ENCODE measurements at regions of chrX and their contacts with region 1.

Region 1: DNA sequence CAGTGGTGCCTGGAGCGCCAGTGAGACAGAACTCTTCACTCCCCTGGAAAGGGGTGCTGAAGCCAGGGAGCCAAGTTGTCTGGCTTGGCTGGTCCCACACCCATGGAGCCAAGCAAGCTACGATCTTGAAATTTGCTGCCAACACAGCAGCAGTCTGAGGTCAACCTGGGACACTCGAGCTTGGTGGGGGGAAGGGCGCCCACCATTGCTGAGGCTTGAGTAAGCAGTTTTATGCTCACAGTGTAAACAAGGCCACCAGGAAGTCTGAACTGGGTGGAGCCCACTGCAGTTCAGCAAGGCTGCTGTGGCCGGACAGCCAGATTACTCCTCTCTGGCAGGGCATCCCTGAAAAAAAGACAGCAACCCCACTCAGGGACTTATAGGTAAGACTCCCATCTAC is 149.5 kb downstream of the EDA2R start:
- DNase-seq: peak in 1 of 4 experiments; percentile 3
- ATAC-seq: peak; percentile 75
- H3K4me3 ChIP-seq: no peak overlapping the region
- H3K27ac ChIP-seq: no peak overlapping the region
- H3K4me1 ChIP-seq: no peaks in the 10 kb centered on the region; a peak in 1 of 5 replicates
- H3K27me3 ChIP-seq: no peaks in the 10 kb centered on the region
- CTCF ChIP-seq: no peak
- EP300 ChIP-seq: no peak
- POLR2A ChIP-seq: no peak
- RAD21 ChIP-seq: no peak

Region 2: DNA sequence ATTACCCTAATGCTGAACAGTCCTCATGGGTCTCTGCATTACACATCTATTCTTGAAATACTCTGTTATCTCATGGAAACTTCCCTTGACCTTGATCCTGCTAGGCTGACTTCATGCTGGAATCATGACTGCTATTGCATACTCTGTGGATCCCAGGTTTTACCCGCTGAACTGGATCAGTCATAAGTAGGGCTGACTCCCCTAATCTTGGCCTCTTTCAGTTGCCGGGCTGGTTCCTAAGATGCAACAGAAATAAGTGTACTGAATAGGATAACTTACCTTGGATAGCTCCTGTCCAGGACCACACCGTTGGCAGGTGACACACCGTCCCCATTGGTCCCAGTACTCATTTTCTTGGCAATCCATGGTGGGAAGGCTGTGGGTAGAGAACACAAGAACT is 126.3 kb after region 1 on chrX:
- CTCF ChIA-PET with region 1: no interaction called
- POLR2A ChIA-PET with region 1: no interaction called
- in situ Hi-C with region 1: no loop called
- intact Hi-C with region 1: no loop called
- DNase-seq: no peak
- ATAC-seq: no peak
- H3K4me3 ChIP-seq: no peak overlapping the region
- H3K27ac ChIP-seq: no peak overlapping the region
- H3K4me1 ChIP-seq: no peaks in the 10 kb centered on the region
- H3K27me3 ChIP-seq: no peaks in the 10 kb centered on the region
- CTCF ChIP-seq: no peak
- EP300 ChIP-seq: no peak
- POLR2A ChIP-seq: no peak
- RAD21 ChIP-seq: no peak

Region 3: GRCh38 chrX:66698273-66699204 is 209.2 kb after region 1 on chrX:
- CTCF ChIA-PET with region 1: no interaction called
- POLR2A ChIA-PET with region 1: no interaction called
- in situ Hi-C with region 1: no loop called
- intact Hi-C with region 1: loop called (anchors 10 kb)
- DNase-seq: no peak
- ATAC-seq: no peak
- H3K4me3 ChIP-seq: no peak overlapping the region
- H3K27ac ChIP-seq: no peak overlapping the region
- H3K4me1 ChIP-seq: no peaks in the 10 kb centered on the region
- H3K27me3 ChIP-seq: no peaks in the 10 kb centered on the region
- CTCF ChIP-seq: no peak
- EP300 ChIP-seq: no peak
- POLR2A ChIP-seq: no peak
- RAD21 ChIP-seq: no peak